ENCODE measurements at regions of chr7 and their contacts with region 1.

Region 1: GRCh38 chr7:91243591-91244301 is 20.5 kb upstream of the FZD1 start:
- DNase-seq: no peak
- H3K4me3 ChIP-seq: no peak overlapping the region
- CTCF ChIP-seq: no peak

Region 2: GRCh38 chr7:91194841-91195240 is 48.9 kb before region 1 on chr7:
- CTCF ChIA-PET with region 1: no interaction called
- POLR2A ChIA-PET with region 1: no interaction called
- DNase-seq: no peak
- H3K4me3 ChIP-seq: no peak overlapping the region
- CTCF ChIP-seq: no peak

Region 3: DNA sequence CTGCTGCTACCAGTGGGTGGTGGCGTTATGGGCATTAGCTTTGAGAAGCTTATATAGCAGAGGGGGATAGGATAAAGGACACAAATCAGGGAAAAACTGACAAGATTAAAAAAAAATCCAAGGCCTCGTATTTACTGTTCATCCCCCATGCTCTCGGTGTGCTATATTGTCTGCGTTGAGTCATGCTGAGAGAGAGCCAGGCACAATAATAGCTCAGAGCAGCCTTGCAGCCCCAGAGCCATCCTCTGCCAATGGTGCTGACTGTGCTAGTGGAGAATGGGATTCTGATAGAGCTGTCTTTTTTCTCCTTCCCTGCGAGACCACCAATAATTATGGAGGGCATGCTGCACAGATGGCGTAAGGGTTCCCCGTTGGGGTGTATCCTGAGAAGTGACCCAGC is 31.2 kb before region 1 on chr7:
- CTCF ChIA-PET with region 1: no interaction called
- POLR2A ChIA-PET with region 1: no interaction called
- DNase-seq: no peak
- H3K4me3 ChIP-seq: no peak overlapping the region
- CTCF ChIP-seq: no peak

Region 4: GRCh38 chr7:91233212-91233611 is 10.5 kb before region 1 on chr7:
- CTCF ChIA-PET with region 1: interaction called, 10 read pairs
- POLR2A ChIA-PET with region 1: interaction called, 4 read pairs
- DNase-seq: no peak
- H3K4me3 ChIP-seq: no peak overlapping the region
- CTCF ChIP-seq: no peak

Region 5: GRCh38 chr7:91280185-91280584 is 36.4 kb after region 1 on chr7:
- CTCF ChIA-PET with region 1: no interaction called
- POLR2A ChIA-PET with region 1: no interaction called
- DNase-seq: no peak
- H3K4me3 ChIP-seq: no peak overlapping the region
- CTCF ChIP-seq: no peak

Measured in AG04449 (cell line).